ENCODE measurements at regions of chr6 and their contacts with region 1.

Region 1: GRCh38 chr6:4055420-4056041 is 23.4 kb downstream of the FAM217A start:
- DNase-seq: peak; percentile 30
- ATAC-seq: no peak
- H3K4me3 Mint-ChIP-seq: no peak overlapping the region
- H3K27ac Mint-ChIP-seq: peak overlapping the region; percentile 30
- H3K4me1 Mint-ChIP-seq: peaks cover 35% of the 10 kb centered on the region
- H3K27me3 Mint-ChIP-seq: no peaks in the 10 kb centered on the region

Region 2: DNA sequence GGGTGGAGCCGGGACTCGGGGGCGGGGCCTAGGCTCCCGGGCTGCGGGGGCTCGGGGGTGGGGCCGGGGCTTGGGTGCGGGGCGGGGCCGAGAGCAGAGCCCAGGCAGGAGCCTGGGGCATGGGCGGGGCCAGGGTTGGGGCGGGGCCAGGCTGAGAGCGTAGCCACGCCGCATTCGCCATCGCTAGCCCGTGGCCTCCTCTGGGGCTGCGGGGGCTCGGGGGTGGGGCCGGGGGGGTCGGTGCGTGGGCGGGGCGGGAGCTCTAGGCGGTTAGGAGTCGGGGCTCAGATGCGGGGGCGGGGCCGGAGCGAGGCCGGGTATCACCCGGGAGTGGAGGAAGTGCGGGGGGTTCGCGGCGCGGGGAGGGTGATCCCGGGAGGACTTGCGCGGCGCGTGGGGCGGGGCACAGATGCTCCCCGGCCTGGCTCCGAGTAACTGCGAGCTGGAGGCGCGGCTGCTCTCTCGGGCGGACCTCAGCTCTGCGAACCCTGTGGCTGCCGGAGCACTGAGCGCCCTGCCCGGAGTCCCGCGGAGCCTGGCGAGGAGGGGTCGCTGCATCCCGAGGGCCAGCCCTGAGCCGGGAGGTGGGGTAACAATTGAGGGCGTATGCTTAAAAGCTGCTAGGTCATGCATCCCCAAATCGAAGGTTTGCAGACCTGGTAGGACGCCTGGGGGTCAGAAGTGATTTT is 80.3 kb after region 1 on chr6:
- CTCF ChIA-PET with region 1: interaction called, 13 read pairs
- POLR2A ChIA-PET with region 1: interaction called, 11 read pairs
- DNase-seq: peak; percentile 96
- ATAC-seq: peak; percentile 90
- H3K4me3 Mint-ChIP-seq: peak overlapping the region; percentile 83
- H3K27ac Mint-ChIP-seq: peak overlapping the region; percentile 80
- H3K4me1 Mint-ChIP-seq: peaks cover 28% of the 10 kb centered on the region
- H3K27me3 Mint-ChIP-seq: peaks cover 1% of the 10 kb centered on the region

Measured in activated CD8-positive, alpha-beta T cell treated with anti-CD3 and anti-CD28 coated beads, Interleukin-2, amount 10 ng/mL, durations not matched to agents 7 days and 5 days (primary cell).